Activated naive CD4-positive, alpha-beta T cell treated with anti-CD3 and anti-CD28 coated beads for 36 hours (primary cell): ENCODE measurements at regions of chr11 and their contacts with region 1.

Region 1: GRCh38 chr11:47269002-47269828 is 718 bp upstream of the MADD start:
- DNase-seq: peak; percentile 91
- H3K4me3 Mint-ChIP-seq: peak overlapping the region; percentile 85
- H3K27ac Mint-ChIP-seq: peak overlapping the region; percentile 98
- H3K4me1 Mint-ChIP-seq: peaks cover 55% of the 10 kb centered on the region
- H3K27me3 Mint-ChIP-seq: no peaks in the 10 kb centered on the region

Region 2: DNA sequence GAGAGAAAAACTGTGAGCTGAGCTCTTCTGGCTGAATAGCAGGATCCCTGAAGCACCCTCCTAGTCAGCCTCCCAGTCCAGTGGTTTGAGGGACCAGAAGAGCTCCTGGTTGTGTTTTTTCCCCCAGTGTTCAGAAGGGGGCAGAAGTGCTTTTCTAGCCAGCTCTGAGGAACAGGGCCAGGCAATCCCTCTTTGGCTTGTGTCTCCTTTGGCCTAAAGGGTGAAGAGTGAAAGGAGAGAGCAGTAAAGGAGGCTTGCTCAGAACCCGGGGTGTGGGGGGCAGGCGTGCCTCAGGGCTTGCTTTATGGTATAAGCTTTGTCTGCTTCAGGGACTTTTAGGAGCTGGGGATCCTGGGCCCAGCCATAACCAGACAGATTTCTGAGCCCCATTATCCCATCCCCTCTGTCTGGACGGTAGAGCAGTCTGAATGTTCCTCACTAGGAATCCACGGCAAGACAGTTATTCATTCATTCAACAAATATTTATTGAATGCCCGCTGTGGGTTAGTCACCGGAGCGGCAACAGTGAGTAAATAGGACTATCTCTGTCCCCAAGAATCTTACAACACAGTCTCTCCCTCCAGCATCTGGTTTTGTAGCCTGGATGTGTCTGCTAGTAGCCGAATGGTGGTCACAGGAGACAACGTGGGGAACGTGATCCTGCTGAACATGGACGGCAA is 35.1 kb before region 1 on chr11:
- CTCF ChIA-PET with region 1: interaction called, 14 read pairs
- intact Hi-C with region 1: loop called (anchors 1 kb)
- DNase-seq: peak; percentile 38
- H3K4me3 Mint-ChIP-seq: peak overlapping the region; percentile 3
- H3K27ac Mint-ChIP-seq: peak overlapping the region; percentile 77
- H3K4me1 Mint-ChIP-seq: peaks cover 30% of the 10 kb centered on the region
- H3K27me3 Mint-ChIP-seq: no peaks in the 10 kb centered on the region

Region 3: GRCh38 chr11:47354913-47355282 is 85.7 kb after region 1 on chr11:
- CTCF ChIA-PET with region 1: no interaction called
- intact Hi-C with region 1: loop called (anchors 5 kb)
- DNase-seq: no peak
- H3K4me3 Mint-ChIP-seq: no peak overlapping the region
- H3K27ac Mint-ChIP-seq: no peak overlapping the region
- H3K4me1 Mint-ChIP-seq: peaks cover 8% of the 10 kb centered on the region
- H3K27me3 Mint-ChIP-seq: no peaks in the 10 kb centered on the region

Region 4: GRCh38 chr11:47426061-47426956 is 157.1 kb after region 1 on chr11 and contains the start of gene PSMC3:
- CTCF ChIA-PET with region 1: no interaction called
- intact Hi-C with region 1: loop called (anchors 1 kb)
- DNase-seq: peak; percentile 99
- H3K4me3 Mint-ChIP-seq: peak within 1 kb of the TSS; percentile 98
- H3K27ac Mint-ChIP-seq: peak within 1 kb of the TSS; percentile 98
- H3K4me1 Mint-ChIP-seq: peaks cover 26% of the 10 kb centered on the region
- H3K27me3 Mint-ChIP-seq: no peaks in the 10 kb centered on the region
- total RNA-seq, gene PSMC3: 127 to 129 TPM

Region 5: DNA sequence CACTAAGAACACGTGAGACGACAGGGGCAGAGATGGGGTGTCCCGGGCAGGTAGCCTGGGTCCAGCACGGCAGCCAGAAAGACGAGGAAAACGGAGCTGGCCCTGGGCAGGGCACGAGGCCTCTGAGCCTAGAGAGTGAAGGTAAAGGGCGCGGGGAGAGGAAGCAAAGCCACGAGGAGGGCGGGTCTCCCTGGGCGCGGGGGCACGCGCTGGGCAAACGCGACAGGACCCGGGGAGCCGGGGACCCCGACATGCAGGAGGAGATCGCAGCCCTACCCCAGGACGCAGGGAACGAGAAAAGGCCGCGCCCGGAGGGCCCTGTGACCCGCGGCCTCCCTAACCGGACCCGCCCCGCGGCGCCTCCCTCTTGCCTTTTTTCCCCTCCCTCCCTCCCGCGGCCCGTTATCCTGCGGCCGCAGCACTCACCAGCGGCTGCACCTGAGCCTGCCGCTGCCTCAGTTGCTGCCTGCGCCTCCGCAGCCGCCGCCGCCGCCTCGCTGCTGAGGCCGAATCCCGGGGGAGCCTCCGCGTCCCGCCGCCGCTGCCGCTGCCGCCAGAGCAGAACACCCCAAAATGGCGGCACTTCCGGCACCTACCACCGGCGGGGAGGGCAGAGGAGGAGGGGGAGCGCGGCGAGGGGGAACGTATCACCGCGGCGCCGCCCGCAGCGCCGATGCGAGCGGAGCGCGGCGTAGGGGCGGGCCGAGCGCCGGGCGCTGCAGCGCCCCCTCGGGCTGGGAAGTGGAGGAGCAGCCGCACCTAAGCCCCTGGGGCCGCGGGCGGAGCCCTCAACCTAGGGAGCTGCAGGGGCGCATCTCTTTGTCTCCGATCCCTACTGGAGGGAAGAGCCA is 283.6 kb after region 1 on chr11 and contains the start of gene CELF1:
- CTCF ChIA-PET with region 1: no interaction called
- intact Hi-C with region 1: loop called (anchors 2 kb)
- DNase-seq: peak; percentile 95
- H3K4me3 Mint-ChIP-seq: peak within 1 kb of the TSS; percentile 97
- H3K27ac Mint-ChIP-seq: peak within 1 kb of the TSS; percentile 95
- H3K4me1 Mint-ChIP-seq: peaks cover 42% of the 10 kb centered on the region
- H3K27me3 Mint-ChIP-seq: no peaks in the 10 kb centered on the region
- total RNA-seq, gene CELF1: 104 to 105 TPM

Region 6: DNA sequence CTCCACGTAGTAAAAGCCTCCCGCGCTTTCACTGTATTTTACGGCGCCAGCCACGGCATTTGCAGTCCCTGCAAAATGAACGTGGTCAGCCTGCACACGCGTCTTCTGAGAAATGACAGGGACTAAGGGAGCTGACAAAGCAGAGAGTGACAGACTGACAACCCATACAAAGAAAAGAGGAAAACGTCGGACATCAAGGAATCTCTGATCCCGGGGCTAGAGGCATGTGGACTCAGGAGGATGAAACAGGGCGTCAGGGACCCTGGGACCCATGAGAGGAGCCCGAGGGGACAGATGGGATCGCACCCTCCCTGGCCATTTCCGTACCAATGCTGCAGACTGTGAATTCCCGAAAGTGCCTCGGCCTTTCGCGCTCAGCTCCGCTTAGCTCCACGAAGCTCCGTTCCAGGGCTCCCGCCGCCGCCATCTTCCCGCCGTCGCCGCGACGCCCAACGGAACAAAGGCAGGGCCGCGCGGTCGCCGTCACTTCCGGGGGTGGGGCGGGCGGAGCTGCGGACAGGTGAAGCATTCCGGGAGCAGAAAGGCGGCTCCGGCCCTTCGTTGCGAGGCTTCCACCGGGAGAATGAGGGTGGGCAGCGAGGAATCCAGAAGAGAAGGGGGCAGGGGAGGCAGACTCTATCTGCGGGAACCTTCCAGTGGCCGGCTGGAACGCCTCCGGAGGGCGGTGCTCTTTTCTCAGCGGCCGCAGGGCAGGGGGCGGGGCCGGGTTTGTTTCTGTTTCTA is 578.8 kb after region 1 on chr11 and contains the start of gene NUP160:
- CTCF ChIA-PET with region 1: no interaction called
- intact Hi-C with region 1: loop called (anchors 1 kb)
- DNase-seq: peak; percentile 92
- H3K4me3 Mint-ChIP-seq: peak within 1 kb of the TSS; percentile 93
- H3K27ac Mint-ChIP-seq: peak within 1 kb of the TSS; percentile 92
- H3K4me1 Mint-ChIP-seq: peaks cover 47% of the 10 kb centered on the region
- H3K27me3 Mint-ChIP-seq: no peaks in the 10 kb centered on the region
- total RNA-seq, gene NUP160: 64.7 to 64.8 TPM